ENCODE measurements at regions of chr12 and their contacts with region 1.

Region 1: DNA sequence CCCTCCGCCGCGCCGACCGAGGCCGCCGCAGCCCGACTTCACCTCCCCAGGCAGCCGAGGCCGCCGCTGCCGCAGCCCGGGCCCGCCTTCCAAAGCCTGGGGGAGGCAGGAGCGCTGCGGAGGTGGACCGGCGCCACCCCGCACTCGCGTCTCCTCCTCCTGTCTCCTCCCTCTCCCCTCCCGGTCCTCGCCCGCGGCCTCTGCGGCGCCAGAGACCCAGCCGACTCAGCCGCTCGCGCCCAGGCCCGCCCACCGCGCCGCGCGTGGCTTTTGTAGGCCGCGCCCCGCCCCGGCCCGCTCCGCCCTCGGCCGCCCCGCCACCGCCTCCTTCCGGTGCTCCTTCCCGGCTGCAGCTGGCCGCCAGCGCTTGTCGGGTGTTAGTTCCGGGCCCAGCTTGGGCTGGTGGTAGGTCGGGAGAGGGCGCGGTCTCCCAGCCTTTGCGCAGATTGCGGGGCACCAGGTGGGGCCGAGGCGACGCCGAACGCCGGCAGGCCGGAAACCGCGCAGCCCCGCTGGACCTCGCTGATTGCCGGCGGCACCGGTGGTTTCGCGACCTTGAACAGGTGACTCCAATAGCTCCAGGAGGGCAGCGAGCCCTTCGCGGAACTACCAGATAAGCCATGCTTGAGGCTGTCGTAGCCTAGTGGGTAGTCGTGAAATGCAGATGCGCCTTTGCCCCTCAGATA is at the start of gene CAPRIN2:
- DNase-seq: peak; percentile 81 to 99 (median 92)

Region 2: GRCh38 chr12:30695199-30696103 is 59.4 kb before region 1 on chr12 and contains the start of gene IPO8:
- intact Hi-C with region 1: loop called (anchors 1 kb)
- DNase-seq: peak; percentile 87 to 98 (median 90)

Region 3: GRCh38 chr12:30806989-30807694 is 52.3 kb after region 1 on chr12:
- intact Hi-C with region 1: loop called (anchors 1 kb)
- DNase-seq: peak in 2 of 10 donors; percentile 18 to 79

Region 4: DNA sequence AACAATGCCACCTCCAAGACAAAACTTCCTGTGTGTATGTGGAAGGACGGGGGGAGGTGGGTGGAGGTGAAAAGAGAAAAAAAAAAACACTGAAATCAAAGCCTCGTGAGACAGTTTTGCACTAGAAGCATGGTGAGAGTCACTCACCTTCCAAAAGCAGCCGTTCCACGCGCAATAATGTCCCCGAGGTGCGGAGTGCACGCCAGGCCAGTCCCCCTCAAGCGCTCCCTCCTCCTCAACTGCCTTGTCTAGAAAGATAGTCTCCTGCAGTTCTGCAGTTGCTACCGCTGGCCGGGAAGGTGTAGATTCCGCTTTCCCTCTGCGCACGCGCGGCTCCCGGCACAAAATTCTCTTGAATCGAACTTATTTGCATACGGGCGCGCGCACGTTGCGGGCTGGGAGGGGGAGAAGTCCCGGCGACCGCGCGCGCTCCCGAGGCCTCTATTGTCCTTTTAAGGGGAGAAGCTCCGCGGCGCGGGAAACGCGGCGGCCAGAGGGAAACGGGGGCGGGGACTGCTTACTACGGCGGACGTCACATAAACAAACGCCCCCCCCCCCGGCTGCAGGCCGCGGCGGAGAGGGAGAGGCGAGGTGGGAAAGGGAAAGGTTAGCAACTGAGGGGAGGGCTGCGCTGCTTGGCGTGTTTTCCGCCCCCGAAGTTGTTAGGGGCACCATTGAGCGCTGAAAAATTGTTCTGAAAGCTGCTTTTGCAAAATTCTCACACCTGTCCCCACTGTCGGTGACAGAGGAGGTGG is 571.2 kb after region 1 on chr12 and contains the start of gene SINHCAF:
- intact Hi-C with region 1: loop called (anchors 5 kb)
- DNase-seq: peak; percentile 91 to 99 (median 97)